K562 (cell line): ENCODE measurements at regions of chr4 and their contacts with region 1.

Region 1: GRCh38 chr4:154626793-154627484 is 14.5 kb upstream of the FGG start:
- DNase-seq: peak; percentile 63 to 77 (median 70)
- ATAC-seq: peak; percentile 100
- H3K4me3 ChIP-seq: no peak overlapping the region
- H3K27ac ChIP-seq: no peak overlapping the region
- H3K4me1 ChIP-seq: peaks cover 0 to 9% of the 10 kb centered on the region in 2 experiments; a peak in 2 of 5 replicates
- H3K27me3 ChIP-seq: peaks cover 2 to 13% of the 10 kb centered on the region in 2 experiments; a peak in 3 of 5 replicates
- CTCF ChIP-seq: peak; percentile 81 to 99 (median 96)
- EP300 ChIP-seq: no peak
- POLR2A ChIP-seq: no peak
- RAD21 ChIP-seq: peak; percentile 56 to 83

Region 2: GRCh38 chr4:155376387-155377268 is 749.7 kb after region 1 on chr4 and contains the start of gene MAP9:
- CTCF ChIA-PET with region 1: no interaction called
- POLR2A ChIA-PET with region 1: no interaction called
- in situ Hi-C with region 1: no loop called
- intact Hi-C with region 1: loop called (anchors 10 kb)
- DNase-seq: peak in 2 of 4 experiments; percentile 3 to 4
- ATAC-seq: peak; percentile 54
- H3K4me3 ChIP-seq: no peak within 1 kb of the TSS
- H3K27ac ChIP-seq: no peak within 1 kb of the TSS
- H3K4me1 ChIP-seq: peaks cover 0 to 6% of the 10 kb centered on the region in 2 experiments; a peak in 2 of 5 replicates
- H3K27me3 ChIP-seq: no peaks in the 10 kb centered on the region
- CTCF ChIP-seq: no peak
- EP300 ChIP-seq: no peak
- POLR2A ChIP-seq: no peak
- RAD21 ChIP-seq: no peak
- polyA plus RNA-seq, gene MAP9: not detected

Region 3: GRCh38 chr4:155929833-155930232 is 1302.9 kb after region 1 on chr4:
- CTCF ChIA-PET with region 1: no interaction called
- POLR2A ChIA-PET with region 1: no interaction called
- in situ Hi-C with region 1: loop called (anchors 10 kb)
- intact Hi-C with region 1: no loop called
- DNase-seq: no peak
- ATAC-seq: no peak
- H3K4me3 ChIP-seq: no peak overlapping the region
- H3K27ac ChIP-seq: no peak overlapping the region
- H3K4me1 ChIP-seq: no peaks in the 10 kb centered on the region
- H3K27me3 ChIP-seq: no peaks in the 10 kb centered on the region
- CTCF ChIP-seq: no peak
- EP300 ChIP-seq: no peak
- POLR2A ChIP-seq: no peak
- RAD21 ChIP-seq: no peak